ENCODE measurements at regions of chr7 and their contacts with region 1.

Region 1: DNA sequence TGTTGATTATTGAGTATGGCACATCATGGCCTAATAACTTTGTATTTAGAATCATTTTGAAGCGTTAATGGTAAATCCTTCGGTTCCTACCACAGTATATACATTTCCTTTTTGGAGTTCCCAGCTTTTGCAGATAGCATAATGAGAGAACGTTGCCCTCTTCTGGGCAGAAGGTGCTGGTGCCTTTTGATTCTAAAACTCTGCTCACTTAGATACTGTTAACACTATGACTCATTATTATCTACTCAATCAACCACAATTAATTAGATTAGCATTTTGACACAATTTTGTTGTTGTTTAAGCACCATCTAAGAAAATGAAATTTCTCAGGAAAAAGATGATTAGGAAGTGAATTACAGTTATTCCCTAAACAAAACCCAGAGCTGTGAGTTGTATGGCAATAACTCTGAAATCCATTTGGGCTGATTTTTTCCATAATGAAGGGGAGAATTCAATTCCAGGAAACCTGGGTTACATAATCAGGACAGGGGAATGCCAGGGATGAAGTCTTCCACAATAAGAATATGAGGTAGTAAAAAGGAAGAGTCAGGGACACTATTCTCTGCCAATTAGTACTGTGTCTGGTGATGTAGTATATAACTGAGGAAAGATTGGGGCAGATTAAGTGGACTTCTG is 11.5 kb upstream of the DLD start:
- ATAC-seq: peak; percentile 61 to 86 (median 78)
- H3K4me3 ChIP-seq: no peak overlapping the region
- H3K27ac ChIP-seq: no peak overlapping the region
- H3K4me1 ChIP-seq: no peaks in the 10 kb centered on the region

Region 2: DNA sequence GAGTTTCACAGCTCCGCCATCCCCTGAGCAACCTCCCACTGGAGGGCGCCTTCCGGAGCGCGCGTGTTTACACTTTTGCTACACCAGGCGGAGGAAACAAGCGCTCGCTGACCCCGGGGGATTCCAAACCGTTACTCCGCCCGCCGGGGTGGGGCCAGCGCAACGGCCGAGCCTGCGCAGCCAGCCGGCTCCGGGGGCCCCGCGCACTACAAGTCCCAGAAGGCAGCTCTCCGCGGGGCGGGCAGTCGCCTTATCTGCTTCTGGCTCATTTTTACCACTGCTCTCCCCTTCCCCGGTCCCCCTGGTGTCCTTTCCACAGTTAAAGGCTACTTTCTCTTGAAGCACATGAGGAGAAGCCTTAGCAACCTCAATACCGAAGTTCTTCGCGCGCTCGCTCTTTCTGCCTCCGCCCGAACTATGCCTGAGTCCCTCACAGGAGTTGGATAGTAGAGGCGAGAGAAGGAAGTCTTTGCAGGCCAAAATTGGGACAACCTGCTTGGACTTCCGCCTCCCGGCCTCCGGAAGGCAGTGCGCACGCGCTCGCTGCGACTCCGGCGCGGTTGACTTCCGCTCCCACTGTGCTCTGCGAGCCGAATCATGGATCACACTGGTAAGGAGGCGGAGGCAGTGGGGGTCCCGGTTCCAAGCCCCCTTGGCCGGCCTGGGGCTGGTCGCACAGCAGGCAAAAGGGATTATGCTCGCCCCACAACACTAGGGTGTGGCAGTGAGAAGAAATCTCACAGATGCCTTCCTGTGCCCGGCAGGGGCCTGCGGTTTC is 135.8 kb before region 1 on chr7 and contains the start of gene CBLL1:
- in situ Hi-C with region 1: loop called in 2 of 9 experiments (anchors 25 kb)
- ATAC-seq: peak; percentile 86 to 96 (median 96)
- H3K4me3 ChIP-seq: peak within 1 kb of the TSS; percentile 77 to 85 (median 80)
- H3K27ac ChIP-seq: peak within 1 kb of the TSS; percentile 91 to 96
- H3K4me1 ChIP-seq: peaks cover 9 to 18% of the 10 kb centered on the region in 2 donors
- total RNA-seq, gene CBLL1: 18.3 to 27.6 (median 24.5) TPM

Region 3: GRCh38 chr7:107768272-107768671 is 111.2 kb before region 1 on chr7:
- in situ Hi-C with region 1: loop called in 1 of 9 experiments (anchors 10 kb)
- ATAC-seq: peak in 3 of 8 experiments; percentile 24 to 74 (median 61)
- H3K4me3 ChIP-seq: no peak overlapping the region
- H3K27ac ChIP-seq: no peak overlapping the region
- H3K4me1 ChIP-seq: no peaks in the 10 kb centered on the region

Measured in motor neuron (in vitro differentiated cells).